ENCODE measurements at regions of chr3 and their contacts with region 1.

Region 1: DNA sequence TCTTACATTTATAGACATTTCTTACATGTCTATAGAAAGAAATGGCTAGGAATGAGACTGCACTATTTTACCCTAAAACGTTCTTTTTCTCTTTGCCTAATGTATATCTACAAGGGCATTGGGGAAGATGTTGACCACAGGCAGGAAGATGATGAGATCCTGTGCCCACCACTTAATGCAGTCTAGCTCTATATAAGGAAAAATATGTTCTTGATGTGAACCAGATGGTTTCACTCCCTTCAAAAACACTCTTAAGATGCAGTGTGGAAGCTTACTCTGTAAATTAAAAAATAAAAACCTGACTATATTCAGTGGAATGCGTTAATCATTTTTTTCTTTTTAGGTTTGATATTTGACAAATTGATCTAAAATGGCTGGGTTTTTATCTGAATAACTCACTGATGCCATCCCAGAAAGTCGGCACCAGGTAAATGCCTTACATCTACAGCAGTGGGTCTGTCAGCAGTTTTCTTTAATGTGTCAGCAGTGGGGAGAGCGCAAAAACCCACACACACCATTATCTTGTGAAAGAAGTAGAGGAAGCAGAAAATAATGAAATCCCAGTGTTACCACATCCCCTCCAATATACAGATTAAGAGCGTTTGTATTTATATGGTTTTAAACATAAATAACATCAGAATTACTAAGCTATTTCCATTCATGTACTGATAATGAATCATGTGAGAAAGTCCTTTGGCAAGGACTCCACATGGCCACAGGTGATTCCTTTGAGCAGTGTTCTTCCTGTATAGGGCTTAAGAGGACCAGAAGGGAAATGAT is 10.1 kb downstream of the AGTR1 start:
- DNase-seq: no peak
- H3K4me3 ChIP-seq: no peak overlapping the region
- H3K27ac ChIP-seq: no peak overlapping the region
- H3K4me1 ChIP-seq: peaks cover 0 to 5% (median 0%) of the 10 kb centered on the region in 4 experiments; a peak in 1 of 7 replicates
- H3K27me3 ChIP-seq: no peaks in the 10 kb centered on the region
- CTCF ChIP-seq: no peak
- EP300 ChIP-seq: no peak
- POLR2A ChIP-seq: no peak
- RAD21 ChIP-seq: no peak

Region 2: DNA sequence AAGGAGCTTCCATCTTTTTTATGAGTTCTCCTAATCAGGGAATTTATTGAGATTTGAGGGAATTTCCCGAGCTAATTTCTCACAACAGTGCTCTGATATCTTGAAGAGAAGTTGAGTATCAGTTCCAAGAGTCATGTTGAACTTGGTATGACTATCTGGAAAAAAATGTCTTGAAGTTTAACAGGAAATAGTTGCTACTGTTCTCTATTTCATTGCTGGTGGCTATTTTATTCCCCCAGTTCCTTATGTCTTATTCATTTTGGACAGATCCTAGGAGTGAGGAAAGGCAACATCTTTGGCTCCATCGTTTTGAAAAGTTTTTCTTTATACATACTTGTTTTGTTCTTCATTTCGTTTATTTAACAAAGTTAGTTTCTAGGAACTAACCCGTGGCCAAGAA is 317.9 kb before region 1 on chr3:
- CTCF ChIA-PET with region 1: no interaction called
- POLR2A ChIA-PET with region 1: no interaction called
- DNase-seq: no peak
- H3K4me3 ChIP-seq: no peak overlapping the region
- H3K27ac ChIP-seq: no peak overlapping the region
- H3K4me1 ChIP-seq: no peaks in the 10 kb centered on the region
- H3K27me3 ChIP-seq: no peaks in the 10 kb centered on the region
- CTCF ChIP-seq: no peak
- EP300 ChIP-seq: no peak
- POLR2A ChIP-seq: no peak
- RAD21 ChIP-seq: no peak

Region 3: GRCh38 chr3:148718982-148719862 is 11.4 kb after region 1 on chr3:
- CTCF ChIA-PET with region 1: interaction called, 23 read pairs
- POLR2A ChIA-PET with region 1: no interaction called
- DNase-seq: no peak
- H3K4me3 ChIP-seq: no peak overlapping the region
- H3K27ac ChIP-seq: no peak overlapping the region
- H3K4me1 ChIP-seq: peaks cover 0 to 4% (median 3%) of the 10 kb centered on the region in 4 experiments; a peak in 5 of 7 replicates
- H3K27me3 ChIP-seq: no peaks in the 10 kb centered on the region
- CTCF ChIP-seq: peak in 2 of 3 experiments; percentile 15 to 16; a peak in 2 of 4 replicates
- EP300 ChIP-seq: no peak
- POLR2A ChIP-seq: no peak
- RAD21 ChIP-seq: peak; percentile 46 to 49